MCF 10A (cell line): ENCODE measurements at regions of chr20 and their contacts with region 1.

Region 1: GRCh38 chr20:52943185-52943841 is 28.8 kb upstream of the TSHZ2 start:
- DNase-seq: peak; percentile 88
- H3K4me3 Mint-ChIP-seq: peak overlapping the region; percentile 5
- H3K27ac Mint-ChIP-seq: peak overlapping the region; percentile 70
- H3K4me1 Mint-ChIP-seq: peaks cover 38% of the 10 kb centered on the region
- H3K27me3 Mint-ChIP-seq: no peaks in the 10 kb centered on the region
- CTCF ChIP-seq: no peak

Region 2: DNA sequence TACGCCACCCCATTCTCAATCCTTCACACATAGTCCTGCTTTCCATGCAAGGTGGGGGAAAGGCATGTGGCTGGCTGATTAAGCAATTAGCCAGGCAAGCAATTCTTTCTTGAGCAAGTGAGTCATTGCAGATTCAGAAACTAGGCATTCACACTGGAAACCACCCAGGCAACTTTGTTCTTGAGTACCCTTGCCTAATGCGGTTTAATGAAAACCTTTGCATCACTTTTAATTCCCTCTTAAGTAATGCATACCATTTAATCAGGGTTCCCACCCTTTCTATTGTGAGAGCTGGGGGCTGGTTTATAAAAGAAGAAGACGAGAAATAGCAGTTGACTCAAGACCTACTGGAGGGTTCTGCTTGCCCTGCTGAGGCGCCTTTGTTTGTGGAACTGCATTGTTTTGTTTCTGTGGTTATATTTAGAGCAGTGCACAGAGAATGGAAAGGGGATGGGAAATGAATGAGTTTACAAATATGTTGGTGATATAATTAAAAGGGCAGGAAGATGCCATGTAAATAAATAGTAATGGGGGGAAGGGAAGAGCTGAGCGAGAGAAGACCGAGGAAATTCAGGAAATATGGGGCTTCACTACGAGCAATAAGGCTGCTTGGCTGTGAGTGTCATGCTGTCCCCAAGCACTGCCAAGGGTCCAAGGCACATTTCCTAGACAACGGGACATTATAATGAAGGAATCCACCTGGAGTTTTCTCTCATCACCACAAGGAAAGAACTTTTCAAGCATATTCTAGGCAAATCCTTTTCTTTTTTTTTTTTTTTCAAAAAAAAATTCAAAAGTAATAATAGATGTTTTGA is 20.0 kb before region 1 on chr20:
- CTCF ChIA-PET with region 1: interaction called, 4 read pairs
- POLR2A ChIA-PET with region 1: interaction called, 21 read pairs
- intact Hi-C with region 1: loop called (anchors 1 kb)
- DNase-seq: peak; percentile 98
- H3K4me3 Mint-ChIP-seq: peak overlapping the region; percentile 56
- H3K27ac Mint-ChIP-seq: peak overlapping the region; percentile 89
- H3K4me1 Mint-ChIP-seq: peaks cover 44% of the 10 kb centered on the region
- H3K27me3 Mint-ChIP-seq: no peaks in the 10 kb centered on the region
- CTCF ChIP-seq: no peak

Region 3: GRCh38 chr20:52965380-52965779 is 22.1 kb after region 1 on chr20:
- CTCF ChIA-PET with region 1: interaction called, 6 read pairs
- POLR2A ChIA-PET with region 1: interaction called, 12 read pairs
- intact Hi-C with region 1: no loop called
- DNase-seq: no peak
- H3K4me3 Mint-ChIP-seq: no peak overlapping the region
- H3K27ac Mint-ChIP-seq: no peak overlapping the region
- H3K4me1 Mint-ChIP-seq: peaks cover 5% of the 10 kb centered on the region
- H3K27me3 Mint-ChIP-seq: no peaks in the 10 kb centered on the region
- CTCF ChIP-seq: no peak

Region 4: DNA sequence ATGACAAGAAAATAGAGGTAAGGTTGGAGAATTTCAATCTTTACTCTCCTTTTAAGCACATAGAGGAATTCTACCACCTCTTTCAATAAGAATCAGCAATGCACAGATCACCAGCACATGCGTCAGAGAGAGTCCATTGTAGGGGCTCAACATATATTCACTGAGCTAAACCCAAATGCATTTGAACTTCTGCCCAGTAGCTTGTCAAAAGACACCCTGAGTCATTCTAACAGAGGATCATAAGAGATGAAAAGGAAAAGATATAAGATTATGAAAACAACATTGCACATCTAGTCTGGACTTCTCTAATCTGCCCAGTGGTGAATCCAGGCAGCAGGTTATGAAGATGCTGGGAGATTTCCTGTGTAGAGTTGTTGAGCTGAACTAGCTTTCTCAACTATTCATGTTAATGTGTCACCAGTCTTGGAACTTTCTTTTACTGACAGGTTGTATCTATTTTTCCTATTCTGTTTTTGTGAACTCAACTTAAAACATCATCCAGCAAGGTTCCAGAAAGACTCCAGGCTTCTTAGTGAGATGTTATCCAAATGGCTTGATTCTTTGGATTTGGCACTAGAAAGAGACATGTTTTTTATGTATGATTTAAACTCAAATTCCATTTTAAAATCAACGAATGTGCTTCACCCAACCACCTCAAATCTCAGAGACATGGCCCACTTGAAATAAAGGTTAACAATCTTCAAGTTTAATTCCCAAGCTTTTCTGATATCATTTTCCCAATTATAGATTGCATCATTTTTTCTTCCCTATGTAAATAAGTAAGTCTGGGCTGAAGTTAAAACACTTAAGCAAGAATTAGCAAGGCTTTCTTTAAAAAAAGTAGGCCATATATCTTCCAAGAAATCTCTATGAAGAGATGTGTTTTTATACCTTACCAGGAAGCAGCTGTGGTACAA is 118.1 kb after region 1 on chr20:
- CTCF ChIA-PET with region 1: no interaction called
- POLR2A ChIA-PET with region 1: no interaction called
- intact Hi-C with region 1: no loop called
- DNase-seq: no peak
- H3K4me3 Mint-ChIP-seq: no peak overlapping the region
- H3K27ac Mint-ChIP-seq: no peak overlapping the region
- H3K4me1 Mint-ChIP-seq: no peaks in the 10 kb centered on the region
- H3K27me3 Mint-ChIP-seq: no peaks in the 10 kb centered on the region
- CTCF ChIP-seq: no peak

Region 5: DNA sequence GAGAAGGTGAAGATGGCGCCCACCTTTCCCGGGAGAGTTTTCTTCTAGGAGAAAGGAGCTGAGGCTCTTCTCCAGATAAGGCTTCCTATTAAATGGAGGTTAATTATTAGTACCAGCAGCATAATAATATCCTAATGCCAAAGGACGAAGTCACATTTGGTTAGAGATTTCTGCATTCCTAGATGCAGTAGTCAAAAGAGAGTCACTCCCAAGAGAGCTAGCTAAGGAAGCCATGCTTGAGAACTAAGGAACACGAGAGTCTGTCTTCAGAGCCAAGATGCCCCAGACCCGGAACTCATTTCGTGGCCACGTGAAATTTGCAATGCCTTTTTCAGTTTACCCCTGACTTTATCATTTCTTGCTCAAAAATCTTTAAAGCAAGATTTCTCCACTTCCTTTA is 161.6 kb after region 1 on chr20:
- CTCF ChIA-PET with region 1: no interaction called
- POLR2A ChIA-PET with region 1: no interaction called
- intact Hi-C with region 1: no loop called
- DNase-seq: no peak
- H3K4me3 Mint-ChIP-seq: no peak overlapping the region
- H3K27ac Mint-ChIP-seq: no peak overlapping the region
- H3K4me1 Mint-ChIP-seq: peaks cover 21% of the 10 kb centered on the region
- H3K27me3 Mint-ChIP-seq: no peaks in the 10 kb centered on the region
- CTCF ChIP-seq: no peak